Breast epithelium (tissue), 4 donors: ENCODE measurements at regions of chr3 and their contacts with region 1.

Region 1: DNA sequence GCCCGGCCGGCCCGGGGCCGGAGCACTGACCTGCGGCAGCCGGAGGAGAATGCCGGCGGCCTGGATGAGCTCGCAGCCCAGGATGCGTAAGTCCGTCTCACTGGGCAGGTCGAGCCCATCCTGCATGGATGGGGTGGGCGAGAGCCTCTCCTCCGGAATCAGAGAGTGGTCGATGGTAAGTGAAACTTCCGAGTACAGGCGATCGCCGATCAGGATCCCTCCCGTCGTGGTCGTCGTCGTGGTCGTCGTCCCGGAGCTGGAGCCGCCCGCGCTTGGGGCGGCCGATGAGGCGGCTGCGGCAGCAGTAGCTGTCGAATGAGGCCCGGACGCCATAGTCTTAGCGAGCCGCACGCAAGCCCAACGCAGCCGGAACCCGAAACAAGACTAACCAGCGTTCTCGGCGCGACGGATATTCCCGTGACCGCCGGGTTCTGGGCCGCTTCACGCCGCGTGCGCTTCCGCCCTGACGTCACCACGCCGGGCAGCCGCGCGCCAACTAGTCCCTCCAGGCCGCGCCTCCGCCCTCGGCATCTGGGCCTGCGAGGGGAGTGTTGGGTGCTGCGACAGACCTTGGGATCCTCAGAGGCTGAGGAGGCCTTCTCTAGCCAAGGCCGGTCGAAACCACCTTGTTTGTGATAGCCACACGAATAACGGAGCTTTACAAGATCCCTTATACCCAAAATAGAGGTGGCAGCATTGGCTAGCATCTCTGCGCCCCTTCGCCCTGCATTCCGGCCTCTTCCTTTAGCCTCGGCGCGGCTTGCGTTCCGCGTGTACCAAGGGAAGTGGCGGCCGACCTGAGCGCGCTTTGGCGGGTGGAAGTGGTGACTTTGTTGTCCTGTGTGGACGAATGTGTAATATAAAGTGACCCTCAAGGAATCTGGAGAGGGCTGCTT is at the start of gene CCNL1:
- DNase-seq: peak; percentile 95 to 97
- H3K4me3 ChIP-seq: peak within 1 kb of the TSS; percentile 87 to 98 (median 97)
- H3K27ac ChIP-seq: peak within 1 kb of the TSS; percentile 100
- H3K4me1 ChIP-seq: peaks cover 0 to 31% of the 10 kb centered on the region in 2 donors
- H3K27me3 ChIP-seq: no peaks in the 10 kb centered on the region
- CTCF ChIP-seq: peak in 1 of 3 donors; percentile 25
- POLR2A ChIP-seq: peak; percentile 99
- total RNA-seq, gene CCNL1: 270 to 573 (median 300) TPM

Region 2: DNA sequence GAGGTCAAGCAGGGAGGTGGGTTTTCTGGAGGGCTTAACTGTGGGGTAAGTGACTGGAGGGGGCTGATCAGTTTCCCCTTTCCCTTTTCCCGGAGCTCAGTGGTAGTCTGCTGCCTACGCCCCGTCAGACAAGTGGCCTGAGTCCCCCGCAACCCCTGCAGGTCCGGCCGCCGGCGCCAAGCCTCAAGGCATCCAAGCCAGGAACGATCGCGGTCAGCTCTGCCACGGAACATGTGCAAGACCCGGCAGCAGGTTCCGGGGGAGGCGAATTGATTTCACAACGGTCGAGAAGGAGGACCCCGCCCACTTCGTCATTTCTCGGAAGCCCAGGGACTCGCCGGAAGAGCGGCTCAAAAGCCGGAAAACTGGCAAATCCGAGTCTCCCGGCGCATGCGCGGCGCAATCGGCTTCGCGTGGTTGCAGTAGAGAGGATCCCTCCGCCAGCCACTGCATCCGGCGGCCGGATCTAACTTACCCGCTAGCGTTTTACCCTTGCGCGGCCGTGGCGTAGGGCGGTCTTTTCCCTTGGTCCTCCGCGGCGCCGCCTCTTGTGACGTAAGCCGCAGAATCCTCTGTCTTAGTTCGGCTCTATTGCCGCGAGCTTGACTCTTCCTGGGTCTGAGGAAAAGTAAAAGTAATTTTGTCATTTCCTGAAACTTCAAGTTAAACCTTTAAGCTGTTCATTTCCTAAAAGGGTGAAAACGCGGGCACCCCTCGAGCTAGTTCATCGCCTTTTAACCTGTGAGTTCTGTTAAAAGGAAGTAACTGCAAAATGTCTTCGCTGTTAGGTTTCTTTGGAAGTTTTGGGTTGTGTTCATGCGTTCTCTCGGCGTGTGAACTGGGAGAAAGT is 14.9 kb after region 1 on chr3:
- intact Hi-C with region 1: loop called (anchors 2 kb)
- DNase-seq: peak; percentile 98
- H3K4me3 ChIP-seq: peak overlapping the region; percentile 54 to 77 (median 64)
- H3K27ac ChIP-seq: peak overlapping the region; percentile 98 to 100
- H3K4me1 ChIP-seq: peaks cover 0 to 10% of the 10 kb centered on the region in 2 donors
- H3K27me3 ChIP-seq: no peaks in the 10 kb centered on the region
- CTCF ChIP-seq: no peak
- POLR2A ChIP-seq: peak; percentile 96